ENCODE measurements at regions of chr15 and their contacts with region 1.

Region 1: DNA sequence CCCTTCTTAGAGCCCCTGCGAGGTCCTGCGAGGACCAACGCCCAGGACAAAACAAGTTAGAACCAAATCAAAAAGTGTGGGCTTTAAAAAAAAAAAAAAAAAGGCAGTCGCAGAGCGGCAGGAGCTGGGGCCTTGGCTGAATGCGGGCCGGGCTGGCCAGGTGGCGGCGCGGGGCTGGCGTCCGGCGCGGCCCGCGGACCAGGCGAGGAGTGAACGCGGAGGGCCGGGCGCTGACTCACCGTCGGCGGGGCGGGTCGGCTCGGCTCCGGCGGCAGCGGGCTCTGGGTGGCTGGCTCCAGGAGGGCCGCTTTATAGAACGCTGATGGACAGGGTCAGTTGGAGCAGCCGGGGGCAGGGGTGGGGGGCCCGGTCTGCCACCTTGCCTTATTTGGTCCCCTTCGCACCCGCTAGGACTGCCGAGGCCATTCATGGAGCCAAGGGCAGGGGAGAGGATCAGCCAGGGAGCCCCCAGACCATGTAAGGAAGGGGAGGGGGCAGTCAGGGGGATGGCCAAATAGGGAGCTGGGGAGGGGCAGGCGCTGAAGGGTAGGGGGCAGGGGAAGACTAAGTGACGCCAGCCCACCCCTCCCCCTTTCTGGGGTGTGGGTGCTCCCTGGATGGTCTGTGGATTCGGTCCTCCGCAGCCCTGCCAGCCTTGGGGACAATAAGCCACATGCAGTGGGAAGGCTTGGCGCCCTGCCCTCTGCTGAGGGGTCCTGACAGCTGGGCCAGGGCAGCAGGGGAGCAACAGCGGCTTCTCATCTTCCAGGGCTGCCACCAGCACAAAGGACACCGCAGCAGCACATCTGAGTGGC is at the start of gene ACTC1:
- DNase-seq: peak in 1 of 2 experiments; percentile 28
- H3K4me3 ChIP-seq: no peak within 1 kb of the TSS
- H3K4me3 Mint-ChIP-seq: no peak within 1 kb of the TSS
- H3K27ac Mint-ChIP-seq: no peak within 1 kb of the TSS
- H3K4me1 ChIP-seq: no peaks in the 10 kb centered on the region
- H3K4me1 Mint-ChIP-seq: no peaks in the 10 kb centered on the region
- H3K27me3 ChIP-seq: no peaks in the 10 kb centered on the region; the same call in 1 of the 2 replicates
- H3K27me3 Mint-ChIP-seq: peaks cover 21% of the 10 kb centered on the region
- CTCF ChIP-seq: no peak
- total RNA-seq, gene ACTC1: not detected in 2 replicates

Region 2: DNA sequence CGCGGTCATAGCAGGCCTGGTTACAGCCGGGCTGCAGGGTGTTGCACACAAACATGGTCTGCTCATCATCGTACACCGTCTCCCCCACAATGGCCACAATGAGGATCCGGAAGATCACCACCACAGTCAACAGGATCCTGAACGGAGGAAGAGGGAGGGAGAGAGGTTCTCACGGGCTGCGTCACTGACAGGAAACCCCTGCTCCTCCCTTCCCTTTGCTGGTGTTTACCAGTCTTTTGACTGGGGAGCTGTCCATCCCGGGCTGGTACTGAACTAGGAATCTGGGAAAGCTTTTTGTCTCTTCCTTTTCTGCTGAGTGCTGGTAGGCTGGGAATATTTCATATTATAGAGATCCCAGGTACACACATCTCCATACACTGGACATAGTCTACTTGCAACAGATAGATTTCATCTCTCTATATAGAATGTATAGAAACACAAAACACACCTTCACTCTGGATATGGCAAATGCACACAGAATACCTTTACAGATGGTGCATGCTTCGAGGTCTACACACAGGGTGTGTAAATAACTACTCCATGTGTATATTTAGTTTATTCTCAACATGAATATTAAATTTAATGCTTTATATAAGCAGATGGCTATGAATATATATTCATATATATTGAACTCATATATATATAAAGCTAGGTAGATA is 42.1 kb before region 1 on chr15:
- CTCF ChIA-PET with region 1: no interaction called
- POLR2A ChIA-PET with region 1: no interaction called
- intact Hi-C with region 1: no loop called
- DNase-seq: peak in 1 of 2 experiments; percentile 52
- H3K4me3 ChIP-seq: no peak overlapping the region
- H3K4me3 Mint-ChIP-seq: no peak overlapping the region
- H3K27ac Mint-ChIP-seq: no peak overlapping the region
- H3K4me1 ChIP-seq: no peaks in the 10 kb centered on the region
- H3K4me1 Mint-ChIP-seq: no peaks in the 10 kb centered on the region
- H3K27me3 ChIP-seq: no peaks in the 10 kb centered on the region
- H3K27me3 Mint-ChIP-seq: peaks cover 18% of the 10 kb centered on the region
- CTCF ChIP-seq: no peak

Region 3: DNA sequence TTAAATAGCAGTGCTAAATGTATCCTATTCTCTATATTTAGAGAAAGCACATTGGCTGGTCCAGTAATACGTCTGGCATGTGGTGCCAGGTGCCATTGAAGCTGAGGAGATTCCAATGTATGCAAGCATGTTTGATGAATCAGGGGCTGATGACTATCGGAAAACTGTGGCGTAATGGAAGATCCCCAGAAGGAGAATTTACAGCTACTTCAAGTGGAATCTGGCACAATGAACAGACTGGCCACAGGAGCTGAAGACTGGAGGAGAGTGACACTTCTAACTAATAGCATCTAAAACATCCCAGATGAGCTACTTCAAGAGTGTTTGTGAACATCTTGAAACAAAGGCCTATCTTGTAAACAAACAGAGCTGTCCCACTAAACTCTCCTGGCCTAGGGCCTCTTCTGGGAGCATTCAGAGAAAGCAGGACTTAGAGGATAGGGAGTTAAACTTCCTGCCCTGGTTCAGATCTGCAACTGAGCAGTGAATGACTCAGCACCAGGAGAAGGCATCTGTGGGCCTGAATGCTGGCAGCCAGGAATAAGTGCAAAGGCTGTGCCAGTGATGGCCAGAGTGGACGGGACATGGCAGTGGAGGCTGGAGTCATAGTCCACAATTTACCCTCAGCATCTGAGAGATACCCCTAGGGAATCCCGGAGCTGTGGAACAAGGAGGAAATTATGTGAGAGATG is 15.1 kb after region 1 on chr15:
- CTCF ChIA-PET with region 1: no interaction called
- POLR2A ChIA-PET with region 1: no interaction called
- intact Hi-C with region 1: loop called (anchors 1 kb)
- DNase-seq: no peak
- H3K4me3 ChIP-seq: no peak overlapping the region
- H3K4me3 Mint-ChIP-seq: no peak overlapping the region
- H3K27ac Mint-ChIP-seq: no peak overlapping the region
- H3K4me1 ChIP-seq: no peaks in the 10 kb centered on the region
- H3K4me1 Mint-ChIP-seq: no peaks in the 10 kb centered on the region
- H3K27me3 ChIP-seq: no peaks in the 10 kb centered on the region
- H3K27me3 Mint-ChIP-seq: peaks cover 12% of the 10 kb centered on the region
- CTCF ChIP-seq: no peak

Measured in Caco-2 (cell line).